CD14-positive monocyte (primary cell): ENCODE measurements at regions of chr1 and their contacts with region 1.

Region 1: DNA sequence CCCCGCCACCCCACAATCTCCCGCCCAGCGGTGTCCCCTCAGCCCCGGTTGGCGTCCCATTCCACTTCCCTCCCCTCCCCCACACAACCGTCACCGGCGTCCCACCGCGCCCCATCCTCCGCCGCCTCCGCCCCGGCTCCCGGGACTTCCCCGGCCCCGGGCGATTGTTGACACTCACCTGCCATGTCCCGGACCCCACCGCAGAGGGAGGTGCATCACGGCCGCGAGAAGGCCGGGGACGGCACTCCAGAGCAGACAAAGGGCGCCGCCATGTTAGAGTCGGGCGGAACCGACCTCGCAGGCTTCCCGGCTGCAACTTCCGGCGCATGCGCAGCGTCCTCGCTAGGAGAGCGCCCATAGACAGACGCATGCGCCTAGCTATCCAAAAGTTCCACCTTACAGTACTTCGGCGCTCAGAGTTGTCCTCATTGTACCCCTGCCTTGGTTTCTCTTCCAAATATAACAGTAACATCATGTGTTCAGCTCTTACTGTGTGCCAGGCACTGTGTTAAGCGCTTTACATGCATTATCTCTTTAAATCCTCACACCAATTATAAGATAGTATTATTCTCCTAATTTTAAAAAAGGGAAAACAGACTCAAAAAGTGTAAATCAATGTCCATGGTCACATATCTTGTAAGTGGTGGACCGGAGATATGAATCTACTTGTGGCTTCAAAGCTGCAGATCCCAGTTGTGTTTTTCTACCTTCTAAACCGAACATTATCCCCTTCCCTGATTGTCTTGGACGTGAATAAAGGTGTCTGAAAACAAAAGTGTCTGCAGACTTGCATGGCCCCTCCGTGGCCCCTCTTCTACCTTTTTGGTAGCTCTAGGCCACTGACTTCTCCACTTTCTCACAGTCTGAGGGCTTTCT is at the start of gene ZBTB17:
- DNase-seq: peak; percentile 91 to 97 (median 94)
- H3K4me3 ChIP-seq: peak within 1 kb of the TSS; percentile 92 to 98 (median 95)
- H3K4me3 Mint-ChIP-seq: peak within 1 kb of the TSS; percentile 85 to 90
- H3K27ac ChIP-seq: peak within 1 kb of the TSS; percentile 30 to 80
- H3K27ac Mint-ChIP-seq: peak within 1 kb of the TSS; percentile 69 to 94 (median 89)
- H3K4me1 ChIP-seq: peaks cover 9 to 11% of the 10 kb centered on the region in 2 donors
- H3K4me1 Mint-ChIP-seq: peaks cover 20% of the 10 kb centered on the region
- H3K27me3 ChIP-seq: no peaks in the 10 kb centered on the region
- H3K27me3 Mint-ChIP-seq: no peaks in the 10 kb centered on the region
- CTCF ChIP-seq: no peak
- polyA plus RNA-seq, gene ZBTB17: 2.8 to 93.3 (median 7.6) TPM

Region 2: DNA sequence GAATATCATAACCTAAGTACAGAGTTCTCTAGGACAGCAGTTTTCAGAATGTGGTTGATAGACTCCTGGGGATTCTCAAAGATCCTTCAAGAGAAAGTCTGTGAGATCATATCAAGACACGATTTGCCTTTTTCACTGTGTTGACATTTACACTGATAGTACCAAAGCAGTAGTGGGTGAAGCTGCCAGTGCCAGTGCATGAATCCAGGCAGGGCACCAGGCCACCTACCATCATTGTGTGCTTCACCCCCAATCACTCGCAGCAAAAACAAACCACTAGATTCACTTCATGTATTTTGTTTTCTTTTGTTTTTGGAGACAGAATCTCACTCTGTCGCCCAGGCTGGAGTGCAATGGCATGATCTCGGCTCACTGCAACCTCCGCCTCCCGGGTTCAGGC is 425.5 kb before region 1 on chr1:
- intact Hi-C with region 1: no loop called
- DNase-seq: no peak
- H3K4me3 ChIP-seq: no peak overlapping the region
- H3K4me3 Mint-ChIP-seq: no peak overlapping the region
- H3K27ac ChIP-seq: no peak overlapping the region
- H3K27ac Mint-ChIP-seq: peak overlapping the region in 2 of 7 donors; percentile 17 to 54
- H3K4me1 ChIP-seq: no peaks in the 10 kb centered on the region
- H3K4me1 Mint-ChIP-seq: no peaks in the 10 kb centered on the region
- H3K27me3 ChIP-seq: no peaks in the 10 kb centered on the region
- H3K27me3 Mint-ChIP-seq: peaks cover 0 to 3% (median 2%) of the 10 kb centered on the region in 3 donors
- CTCF ChIP-seq: no peak

Region 3: DNA sequence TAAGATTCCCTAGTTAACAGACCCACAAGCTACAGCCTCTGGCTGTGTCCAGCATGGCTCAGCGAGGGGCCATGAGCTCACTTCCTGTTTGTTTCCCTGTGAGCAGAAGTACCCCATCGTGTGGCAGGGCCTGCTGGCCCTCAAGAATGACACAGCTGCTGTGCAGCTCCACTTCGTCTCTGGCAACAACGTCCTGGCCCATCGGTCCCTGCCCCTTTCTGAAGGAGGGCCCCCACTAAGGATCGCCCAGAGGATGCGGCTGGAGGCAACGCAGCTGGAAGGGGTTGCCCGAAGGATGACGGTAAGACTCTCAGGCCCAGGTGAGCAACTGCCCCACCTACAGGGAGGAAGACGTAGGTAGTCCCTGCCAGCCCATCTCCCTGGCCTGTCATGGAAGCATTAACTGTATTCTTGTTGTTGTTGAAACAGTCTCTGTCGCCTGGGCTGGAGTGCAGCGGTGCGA is 38.3 kb before region 1 on chr1:
- intact Hi-C with region 1: loop called in 1 of 2 experiments (anchors 5 kb)
- DNase-seq: peak; percentile 36 to 63 (median 45)
- H3K4me3 ChIP-seq: no peak overlapping the region
- H3K4me3 Mint-ChIP-seq: no peak overlapping the region
- H3K27ac ChIP-seq: peak overlapping the region; percentile 9 to 68
- H3K27ac Mint-ChIP-seq: peak overlapping the region; percentile 69 to 94 (median 87)
- H3K4me1 ChIP-seq: no peaks in the 10 kb centered on the region
- H3K4me1 Mint-ChIP-seq: peaks cover 4% of the 10 kb centered on the region
- H3K27me3 ChIP-seq: no peaks in the 10 kb centered on the region
- H3K27me3 Mint-ChIP-seq: peaks cover 0 to 4% (median 1%) of the 10 kb centered on the region in 3 donors
- CTCF ChIP-seq: peak; percentile 22

Region 4: DNA sequence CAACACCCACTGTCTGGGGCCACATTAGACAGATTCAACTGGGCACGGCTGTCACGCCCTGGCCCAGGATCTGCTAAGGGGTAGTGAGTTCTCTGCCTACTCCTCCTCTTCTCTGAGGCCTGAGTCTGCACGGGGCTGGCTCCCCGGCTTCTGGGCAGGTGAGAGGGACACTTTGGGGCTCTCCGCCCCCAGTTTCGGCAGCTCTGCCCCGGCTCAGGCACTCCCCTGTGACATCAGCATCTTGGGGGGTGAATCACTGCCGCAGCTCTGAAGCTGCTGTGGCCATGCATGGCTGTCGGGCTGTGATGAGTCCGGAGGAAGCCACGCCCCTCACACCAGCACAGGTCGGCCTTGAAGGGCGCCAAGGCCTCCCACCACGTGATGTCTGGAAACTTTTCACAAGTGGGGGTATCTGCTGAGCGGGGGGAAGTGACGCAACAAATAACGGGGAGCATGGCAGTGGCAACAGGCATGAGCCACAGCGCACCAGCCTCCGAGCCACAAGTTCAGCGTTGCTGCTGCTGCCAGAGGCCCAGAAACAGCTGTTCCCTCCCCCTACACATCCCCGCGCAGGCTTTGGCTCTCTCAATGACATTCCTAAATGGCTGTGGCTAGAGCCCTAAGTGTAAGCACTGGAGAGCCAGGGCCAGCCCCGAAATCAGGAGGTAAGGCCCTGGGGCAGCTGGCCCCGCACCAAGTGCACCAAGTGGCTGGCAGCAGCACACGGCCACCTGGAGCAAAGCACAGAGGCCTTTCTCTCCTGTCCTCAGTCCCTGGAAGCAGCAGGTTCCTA is 26.4 kb before region 1 on chr1:
- intact Hi-C with region 1: loop called in 1 of 2 experiments (anchors 2 kb)
- DNase-seq: peak; percentile 97 to 100 (median 98)
- H3K4me3 ChIP-seq: peak overlapping the region in 1 of 3 experiments; percentile 32
- H3K4me3 Mint-ChIP-seq: peak overlapping the region; percentile 8 to 55
- H3K27ac ChIP-seq: peak overlapping the region; percentile 60 to 92
- H3K27ac Mint-ChIP-seq: peak overlapping the region; percentile 88 to 97 (median 94)
- H3K4me1 ChIP-seq: peaks cover 62 to 71% of the 10 kb centered on the region in 2 donors
- H3K4me1 Mint-ChIP-seq: peaks cover 66% of the 10 kb centered on the region
- H3K27me3 ChIP-seq: no peaks in the 10 kb centered on the region
- H3K27me3 Mint-ChIP-seq: no peaks in the 10 kb centered on the region
- CTCF ChIP-seq: no peak